Activated B cell treated with CpG ODN at 0.5 μM for 24 hours (primary cell): ENCODE measurements at regions of chr12 and their contacts with region 1.

Region 1: GRCh38 chr12:116336542-116337065 is 59.1 kb upstream of the MED13L start:
- DNase-seq: peak; percentile 51
- ATAC-seq: peak; percentile 88
- H3K4me3 Mint-ChIP-seq: peak overlapping the region; percentile 73
- H3K27ac Mint-ChIP-seq: peak overlapping the region; percentile 97
- H3K4me1 Mint-ChIP-seq: peaks cover 79% of the 10 kb centered on the region
- H3K27me3 Mint-ChIP-seq: no peaks in the 10 kb centered on the region
- CTCF ChIP-seq: no peak

Region 2: GRCh38 chr12:116060764-116061163 is 275.8 kb before region 1 on chr12:
- CTCF ChIA-PET with region 1: no interaction called
- POLR2A ChIA-PET with region 1: interaction called, 5 read pairs
- intact Hi-C with region 1: loop called (anchors 1 kb)
- DNase-seq: no peak
- ATAC-seq: peak; percentile 89
- H3K4me3 Mint-ChIP-seq: peak overlapping the region; percentile 70
- H3K27ac Mint-ChIP-seq: peak overlapping the region; percentile 83
- H3K4me1 Mint-ChIP-seq: peaks cover 51% of the 10 kb centered on the region
- H3K27me3 Mint-ChIP-seq: no peaks in the 10 kb centered on the region
- CTCF ChIP-seq: no peak

Region 3: DNA sequence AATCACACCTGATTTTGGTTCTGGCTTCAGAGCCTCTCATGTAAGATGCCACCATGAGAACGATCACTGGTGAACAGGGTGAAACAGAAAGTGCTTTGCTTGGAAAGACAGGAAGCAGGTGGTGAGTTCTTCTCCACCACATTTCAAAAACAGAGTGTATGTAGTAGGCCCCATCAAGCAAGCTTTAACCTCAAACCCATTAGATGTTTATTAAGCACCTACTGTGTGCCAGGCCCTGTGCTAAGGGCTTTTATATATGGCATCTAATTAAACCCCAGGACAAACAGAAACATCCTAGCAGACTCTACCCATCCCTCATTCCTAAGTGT is 11.3 kb before region 1 on chr12:
- CTCF ChIA-PET with region 1: no interaction called
- POLR2A ChIA-PET with region 1: interaction called, 30 read pairs
- intact Hi-C with region 1: loop called (anchors 1 kb)
- DNase-seq: no peak
- ATAC-seq: peak; percentile 82
- H3K4me3 Mint-ChIP-seq: no peak overlapping the region
- H3K27ac Mint-ChIP-seq: peak overlapping the region; percentile 87
- H3K4me1 Mint-ChIP-seq: peaks cover 30% of the 10 kb centered on the region
- H3K27me3 Mint-ChIP-seq: no peaks in the 10 kb centered on the region
- CTCF ChIP-seq: no peak

Region 4: DNA sequence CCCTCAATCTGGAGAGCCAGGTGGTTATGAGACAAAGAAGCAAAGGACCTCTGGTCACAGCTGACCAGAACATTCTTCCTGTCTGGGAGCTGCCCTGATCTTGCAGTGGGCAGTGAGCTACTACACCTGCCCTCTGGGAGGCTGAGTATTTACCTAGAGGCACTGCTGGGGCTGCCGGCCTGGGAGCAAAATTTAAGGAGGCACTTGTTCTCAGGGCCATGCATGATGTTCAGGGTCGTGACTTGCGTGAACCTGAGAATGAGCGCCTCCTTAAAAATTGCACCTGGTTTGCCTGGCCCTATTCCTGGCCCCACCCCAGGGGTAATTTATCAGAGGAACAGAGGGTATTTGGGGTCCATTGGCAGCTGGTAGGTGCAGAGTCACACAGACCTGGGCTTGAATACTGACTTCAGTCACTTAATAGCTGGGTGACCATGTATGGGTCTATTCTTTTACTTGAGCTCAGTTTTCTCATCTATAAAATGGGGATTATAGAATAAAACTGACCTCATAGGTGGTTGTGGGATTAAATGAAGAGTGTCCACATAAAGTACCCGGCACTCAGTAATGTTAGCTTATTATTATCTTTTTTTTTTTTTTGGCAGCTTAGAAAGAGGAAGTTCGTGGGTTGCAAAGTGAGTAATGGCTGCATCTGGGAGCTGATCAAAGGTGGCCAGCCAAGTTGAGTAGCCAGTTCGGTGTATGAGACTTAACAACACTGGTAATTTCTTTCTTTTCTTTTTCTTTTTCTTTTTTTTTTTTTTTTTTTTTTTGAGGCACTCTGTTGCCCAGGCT is 48.3 kb after region 1 on chr12:
- CTCF ChIA-PET with region 1: no interaction called
- POLR2A ChIA-PET with region 1: interaction called, 4 read pairs
- intact Hi-C with region 1: loop called (anchors 2 kb)
- DNase-seq: no peak
- ATAC-seq: peak; percentile 90
- H3K4me3 Mint-ChIP-seq: no peak overlapping the region
- H3K27ac Mint-ChIP-seq: no peak overlapping the region
- H3K4me1 Mint-ChIP-seq: peaks cover 11% of the 10 kb centered on the region
- H3K27me3 Mint-ChIP-seq: peaks cover 5% of the 10 kb centered on the region
- CTCF ChIP-seq: no peak

Region 5: DNA sequence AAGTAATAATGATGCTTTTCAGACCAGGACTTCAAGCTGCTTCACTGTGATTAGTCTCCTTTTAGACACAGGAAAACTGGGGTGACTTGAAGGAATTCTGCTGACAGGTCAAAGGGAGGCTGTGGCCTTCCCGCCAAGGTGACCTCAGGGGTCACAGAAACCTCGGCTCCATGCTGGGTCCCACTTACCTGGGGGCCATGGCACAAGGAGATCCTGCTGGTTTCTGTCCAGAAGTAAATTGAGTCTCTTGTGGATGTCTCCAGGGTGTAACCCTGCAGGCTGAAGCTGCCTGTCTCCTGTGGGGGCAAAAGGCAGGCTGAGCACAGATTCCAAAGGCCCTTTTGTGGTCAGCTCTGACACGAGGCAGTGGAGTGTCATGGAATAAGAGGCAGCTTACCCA is 79.6 kb after region 1 on chr12:
- CTCF ChIA-PET with region 1: no interaction called
- POLR2A ChIA-PET with region 1: no interaction called
- intact Hi-C with region 1: no loop called
- DNase-seq: no peak
- ATAC-seq: no peak
- H3K4me3 Mint-ChIP-seq: no peak overlapping the region
- H3K27ac Mint-ChIP-seq: no peak overlapping the region
- H3K4me1 Mint-ChIP-seq: peaks cover 7% of the 10 kb centered on the region
- H3K27me3 Mint-ChIP-seq: no peaks in the 10 kb centered on the region
- CTCF ChIP-seq: no peak

Region 6: DNA sequence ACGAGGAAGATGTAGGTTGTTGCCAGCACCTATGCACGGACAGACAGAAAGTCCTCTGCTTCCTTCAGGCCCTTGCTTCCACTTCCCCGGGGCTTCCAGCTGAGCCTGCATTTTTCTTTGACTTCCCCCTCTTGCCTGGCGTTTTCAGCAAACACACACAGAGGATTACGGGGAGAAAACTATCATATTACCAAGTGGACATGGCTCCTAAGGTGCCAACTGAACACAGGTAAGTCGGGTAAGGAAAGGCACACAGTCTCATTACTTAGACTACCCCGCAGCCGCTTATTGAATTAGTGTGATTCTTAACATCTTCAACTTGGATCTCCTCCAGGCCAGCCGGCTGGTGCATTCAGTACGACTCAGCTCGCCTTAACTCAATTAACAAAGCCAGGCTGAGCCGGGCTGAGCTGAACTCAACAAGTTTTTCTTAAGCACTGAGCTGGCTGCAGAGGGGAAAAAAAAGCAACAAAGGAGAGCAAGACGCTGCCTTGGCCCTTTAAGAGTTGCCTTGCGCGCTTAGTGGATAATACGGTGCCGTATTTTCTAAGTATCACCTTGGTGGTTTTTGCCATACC is 203.4 kb after region 1 on chr12:
- CTCF ChIA-PET with region 1: no interaction called
- POLR2A ChIA-PET with region 1: interaction called, 13 read pairs
- intact Hi-C with region 1: loop called (anchors 5 kb)
- DNase-seq: no peak
- ATAC-seq: no peak
- H3K4me3 Mint-ChIP-seq: no peak overlapping the region
- H3K27ac Mint-ChIP-seq: peak overlapping the region; percentile 19
- H3K4me1 Mint-ChIP-seq: peaks cover 52% of the 10 kb centered on the region
- H3K27me3 Mint-ChIP-seq: no peaks in the 10 kb centered on the region
- CTCF ChIP-seq: no peak

Region 7: GRCh38 chr12:116673681-116674111 is 337.1 kb after region 1 on chr12:
- CTCF ChIA-PET with region 1: no interaction called
- POLR2A ChIA-PET with region 1: no interaction called
- intact Hi-C with region 1: loop called (anchors 2 kb)
- DNase-seq: no peak
- ATAC-seq: no peak
- H3K4me3 Mint-ChIP-seq: peak overlapping the region; percentile 13
- H3K27ac Mint-ChIP-seq: no peak overlapping the region
- H3K4me1 Mint-ChIP-seq: peaks cover 70% of the 10 kb centered on the region
- H3K27me3 Mint-ChIP-seq: no peaks in the 10 kb centered on the region
- CTCF ChIP-seq: no peak

Region 8: GRCh38 chr12:116916714-116917114 is 580.1 kb after region 1 on chr12:
- CTCF ChIA-PET with region 1: no interaction called
- POLR2A ChIA-PET with region 1: no interaction called
- intact Hi-C with region 1: no loop called
- DNase-seq: no peak
- ATAC-seq: peak; percentile 47
- H3K4me3 Mint-ChIP-seq: no peak overlapping the region
- H3K27ac Mint-ChIP-seq: peak overlapping the region; percentile 54
- H3K4me1 Mint-ChIP-seq: peaks cover 67% of the 10 kb centered on the region
- H3K27me3 Mint-ChIP-seq: no peaks in the 10 kb centered on the region
- CTCF ChIP-seq: no peak

Region 9: GRCh38 chr12:118150625-118151024 is 1814.0 kb after region 1 on chr12:
- CTCF ChIA-PET with region 1: no interaction called
- POLR2A ChIA-PET with region 1: no interaction called
- intact Hi-C with region 1: no loop called
- DNase-seq: no peak
- ATAC-seq: no peak
- H3K4me3 Mint-ChIP-seq: no peak overlapping the region
- H3K27ac Mint-ChIP-seq: no peak overlapping the region
- H3K4me1 Mint-ChIP-seq: no peaks in the 10 kb centered on the region
- H3K27me3 Mint-ChIP-seq: no peaks in the 10 kb centered on the region
- CTCF ChIP-seq: no peak